Sigmoid colon (tissue), 7 donors: ENCODE measurements at regions of chr11 and their contacts with region 1.

Region 1: GRCh38 chr11:19553683-19554333 is 158.8 kb upstream of the NAV2 start:
- DNase-seq: peak; percentile 88
- H3K4me3 ChIP-seq: no peak overlapping the region
- H3K27ac ChIP-seq: no peak overlapping the region
- H3K4me1 ChIP-seq: peaks cover 0 to 11% (median 4%) of the 10 kb centered on the region in 4 donors
- H3K27me3 ChIP-seq: no peaks in the 10 kb centered on the region
- CTCF ChIP-seq: peak; percentile 70 to 87 (median 82)
- EP300 ChIP-seq: no peak
- POLR2A ChIP-seq: no peak

Region 2: GRCh38 chr11:19071255-19071654 is 482.6 kb before region 1 on chr11:
- intact Hi-C with region 1: loop called (anchors 2 kb)
- DNase-seq: peak; percentile 75
- H3K4me3 ChIP-seq: no peak overlapping the region
- H3K27ac ChIP-seq: no peak overlapping the region
- H3K4me1 ChIP-seq: no peaks in the 10 kb centered on the region
- H3K27me3 ChIP-seq: no peaks in the 10 kb centered on the region
- CTCF ChIP-seq: peak; percentile 77 to 92 (median 82)
- EP300 ChIP-seq: no peak
- POLR2A ChIP-seq: no peak

Region 3: GRCh38 chr11:19311308-19312030 is 242.3 kb before region 1 on chr11:
- intact Hi-C with region 1: loop called (anchors 1 kb)
- DNase-seq: peak; percentile 75
- H3K4me3 ChIP-seq: no peak overlapping the region
- H3K27ac ChIP-seq: no peak overlapping the region
- H3K4me1 ChIP-seq: peaks cover 0 to 6% (median 4%) of the 10 kb centered on the region in 4 donors
- H3K27me3 ChIP-seq: no peaks in the 10 kb centered on the region
- CTCF ChIP-seq: peak; percentile 21 to 77 (median 70)
- EP300 ChIP-seq: no peak
- POLR2A ChIP-seq: no peak

Region 4: GRCh38 chr11:19573666-19574065 is 19.9 kb after region 1 on chr11:
- intact Hi-C with region 1: no loop called
- DNase-seq: no peak
- H3K4me3 ChIP-seq: no peak overlapping the region
- H3K27ac ChIP-seq: peak overlapping the region in 3 of 4 donors; percentile 92 to 94 (median 93)
- H3K4me1 ChIP-seq: peaks cover 0 to 60% (median 54%) of the 10 kb centered on the region in 4 donors
- H3K27me3 ChIP-seq: no peaks in the 10 kb centered on the region
- CTCF ChIP-seq: no peak
- EP300 ChIP-seq: peak in 2 of 4 donors; percentile 11 to 60
- POLR2A ChIP-seq: no peak

Region 5: DNA sequence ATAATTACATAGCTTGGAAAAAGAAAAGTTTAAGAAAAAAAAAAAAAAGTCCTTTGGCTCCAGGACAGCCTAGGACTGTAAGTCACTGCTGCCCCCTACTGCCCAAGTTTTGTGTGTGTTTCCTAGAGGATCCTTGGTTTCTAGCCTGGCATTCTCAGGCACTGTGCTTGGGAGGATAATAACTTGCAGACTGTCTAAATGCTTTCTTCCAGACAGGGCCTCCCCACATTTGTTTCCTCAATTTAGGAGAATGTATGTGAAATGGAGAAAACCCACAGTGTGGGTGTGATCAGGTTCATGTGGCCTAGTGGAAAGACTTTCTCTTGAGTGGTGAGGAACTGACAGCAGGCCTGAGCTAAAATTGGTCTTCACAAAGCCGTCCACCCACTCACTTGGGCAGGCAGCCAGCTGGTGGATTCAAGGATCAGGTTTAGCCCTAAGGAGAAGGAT is 349.8 kb after region 1 on chr11:
- intact Hi-C with region 1: loop called (anchors 2 kb)
- DNase-seq: peak; percentile 87
- H3K4me3 ChIP-seq: no peak overlapping the region
- H3K27ac ChIP-seq: peak overlapping the region in 3 of 4 donors; percentile 56 to 60 (median 59)
- H3K4me1 ChIP-seq: peaks cover 0 to 58% (median 48%) of the 10 kb centered on the region in 4 donors
- H3K27me3 ChIP-seq: no peaks in the 10 kb centered on the region
- CTCF ChIP-seq: peak; percentile 54 to 79 (median 66)
- EP300 ChIP-seq: no peak
- POLR2A ChIP-seq: no peak

Region 6: GRCh38 chr11:20127671-20128527 is 574.1 kb after region 1 on chr11:
- intact Hi-C with region 1: loop called (anchors 5 kb)
- DNase-seq: peak; percentile 87
- H3K4me3 ChIP-seq: no peak overlapping the region
- H3K27ac ChIP-seq: no peak overlapping the region
- H3K4me1 ChIP-seq: peaks cover 0 to 8% (median 7%) of the 10 kb centered on the region in 4 donors
- H3K27me3 ChIP-seq: no peaks in the 10 kb centered on the region
- CTCF ChIP-seq: peak; percentile 47 to 82 (median 76)
- EP300 ChIP-seq: no peak
- POLR2A ChIP-seq: no peak